ENCODE measurements at regions of chr3 and their contacts with region 1.

Region 1: GRCh38 chr3:123385981-123386380 is 62.9 kb downstream of the ADCY5 start:
- DNase-seq: no peak
- H3K4me3 ChIP-seq: no peak overlapping the region
- H3K27ac ChIP-seq: no peak overlapping the region
- H3K4me1 ChIP-seq: peaks cover 4 to 10% (median 9%) of the 10 kb centered on the region in 4 experiments
- H3K27me3 ChIP-seq: no peaks in the 10 kb centered on the region
- CTCF ChIP-seq: no peak
- EP300 ChIP-seq: no peak
- POLR2A ChIP-seq: no peak
- RAD21 ChIP-seq: no peak

Region 2: GRCh38 chr3:123292321-123293310 is 93.4 kb before region 1 on chr3:
- CTCF ChIA-PET with region 1: no interaction called
- POLR2A ChIA-PET with region 1: no interaction called
- DNase-seq: no peak
- H3K4me3 ChIP-seq: no peak overlapping the region
- H3K27ac ChIP-seq: no peak overlapping the region
- H3K4me1 ChIP-seq: peaks cover 0 to 2% (median 0%) of the 10 kb centered on the region in 4 experiments; a peak in 1 of 7 replicates
- H3K27me3 ChIP-seq: no peaks in the 10 kb centered on the region
- CTCF ChIP-seq: no peak
- EP300 ChIP-seq: no peak
- POLR2A ChIP-seq: no peak
- RAD21 ChIP-seq: no peak

Region 3: GRCh38 chr3:123396163-123397049 is 10.4 kb after region 1 on chr3:
- CTCF ChIA-PET with region 1: interaction called, 11 read pairs
- POLR2A ChIA-PET with region 1: interaction called, 5 read pairs
- DNase-seq: no peak
- H3K4me3 ChIP-seq: no peak overlapping the region
- H3K27ac ChIP-seq: no peak overlapping the region
- H3K4me1 ChIP-seq: no peaks in the 10 kb centered on the region; a peak in 1 of 7 replicates
- H3K27me3 ChIP-seq: no peaks in the 10 kb centered on the region
- CTCF ChIP-seq: no peak
- EP300 ChIP-seq: no peak
- POLR2A ChIP-seq: no peak
- RAD21 ChIP-seq: no peak

Region 4: GRCh38 chr3:123584988-123585937 is 199.3 kb after region 1 on chr3 and contains the start of gene HACD2:
- CTCF ChIA-PET with region 1: no interaction called
- POLR2A ChIA-PET with region 1: no interaction called
- DNase-seq: peak; percentile 95
- H3K4me3 ChIP-seq: peak within 1 kb of the TSS; percentile 80 to 99 (median 88)
- H3K27ac ChIP-seq: peak within 1 kb of the TSS; percentile 100
- H3K4me1 ChIP-seq: peaks cover 0 to 3% (median 0%) of the 10 kb centered on the region in 4 experiments; a peak in 3 of 7 replicates
- H3K27me3 ChIP-seq: no peaks in the 10 kb centered on the region
- CTCF ChIP-seq: no peak
- EP300 ChIP-seq: no peak
- POLR2A ChIP-seq: peak; percentile 70 to 78; a peak in 2 of 3 replicates
- RAD21 ChIP-seq: no peak
- total RNA-seq, gene HACD2: 29.8 and 31.2 TPM in 2 replicates

Measured in H1 (cell line).